MCF 10A (cell line): ENCODE measurements at regions of chr2 and their contacts with region 1.

Region 1: GRCh38 chr2:71157124-71157793 is 26.8 kb downstream of the MPHOSPH10 start:
- DNase-seq: peak; percentile 60
- H3K4me3 Mint-ChIP-seq: peak overlapping the region; percentile 13
- H3K27ac Mint-ChIP-seq: no peak overlapping the region
- H3K4me1 Mint-ChIP-seq: peaks cover 16% of the 10 kb centered on the region
- H3K27me3 Mint-ChIP-seq: no peaks in the 10 kb centered on the region
- CTCF ChIP-seq: peak; percentile 70

Region 2: GRCh38 chr2:71018625-71019024 is 138.6 kb before region 1 on chr2:
- CTCF ChIA-PET with region 1: interaction called, 4 read pairs
- POLR2A ChIA-PET with region 1: no interaction called
- intact Hi-C with region 1: loop called (anchors 1 kb)
- DNase-seq: no peak
- H3K4me3 Mint-ChIP-seq: no peak overlapping the region
- H3K27ac Mint-ChIP-seq: no peak overlapping the region
- H3K4me1 Mint-ChIP-seq: peaks cover 6% of the 10 kb centered on the region
- H3K27me3 Mint-ChIP-seq: no peaks in the 10 kb centered on the region
- CTCF ChIP-seq: no peak

Region 3: GRCh38 chr2:71100195-71100964 is 56.9 kb before region 1 on chr2:
- CTCF ChIA-PET with region 1: interaction called, 3 read pairs
- POLR2A ChIA-PET with region 1: no interaction called
- intact Hi-C with region 1: loop called (anchors 1 kb)
- DNase-seq: peak; percentile 75
- H3K4me3 Mint-ChIP-seq: no peak overlapping the region
- H3K27ac Mint-ChIP-seq: no peak overlapping the region
- H3K4me1 Mint-ChIP-seq: peaks cover 11% of the 10 kb centered on the region
- H3K27me3 Mint-ChIP-seq: no peaks in the 10 kb centered on the region
- CTCF ChIP-seq: peak; percentile 50

Region 4: DNA sequence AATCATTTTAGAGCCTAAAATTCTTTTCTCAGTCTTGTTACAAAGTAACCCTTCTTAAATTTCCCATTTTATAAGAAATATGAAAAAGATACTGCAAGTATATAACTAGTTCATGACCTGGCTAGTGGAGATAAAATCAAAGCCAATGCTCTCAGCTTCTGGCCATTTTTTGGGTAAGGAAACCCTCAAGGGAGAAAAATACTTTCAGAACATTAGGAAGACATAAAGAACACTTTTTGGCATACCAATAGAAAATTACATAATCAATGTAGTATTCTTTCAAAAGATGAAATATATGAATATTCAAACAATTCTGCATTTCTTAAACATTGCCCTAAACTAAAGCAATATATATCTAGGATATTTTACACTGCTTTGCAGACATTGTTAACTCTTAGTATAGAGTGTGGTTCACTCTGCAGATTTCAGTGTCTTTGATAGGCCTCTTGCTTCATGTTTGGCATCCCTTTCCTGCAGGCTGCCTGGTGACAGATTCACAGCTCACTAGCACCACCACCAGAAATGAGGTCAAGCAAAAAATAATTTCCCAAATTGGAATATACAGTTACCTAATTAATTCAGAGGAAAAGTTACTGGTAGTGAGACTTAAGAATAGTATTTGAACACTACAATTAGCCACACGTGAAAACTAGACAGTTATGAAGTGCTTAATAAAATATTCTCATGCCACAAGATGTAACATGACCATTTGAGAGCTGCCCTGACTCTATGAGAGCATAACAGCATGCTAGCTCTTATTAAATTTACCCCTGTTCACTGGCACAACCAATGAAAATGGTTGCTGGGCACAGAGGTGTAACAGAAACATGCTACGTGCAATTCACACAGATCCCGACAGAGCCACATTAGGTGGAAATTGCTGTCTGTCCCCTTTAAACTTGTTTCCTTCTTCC is 33.7 kb after region 1 on chr2:
- CTCF ChIA-PET with region 1: interaction called, 14 read pairs
- POLR2A ChIA-PET with region 1: interaction called, 3 read pairs
- intact Hi-C with region 1: loop called (anchors 1 kb)
- DNase-seq: peak; percentile 43
- H3K4me3 Mint-ChIP-seq: no peak overlapping the region
- H3K27ac Mint-ChIP-seq: no peak overlapping the region
- H3K4me1 Mint-ChIP-seq: no peaks in the 10 kb centered on the region
- H3K27me3 Mint-ChIP-seq: no peaks in the 10 kb centered on the region
- CTCF ChIP-seq: peak; percentile 41

Region 5: GRCh38 chr2:71276311-71277146 is 119.3 kb after region 1 on chr2:
- CTCF ChIA-PET with region 1: interaction called, 20 read pairs
- POLR2A ChIA-PET with region 1: interaction called, 5 read pairs
- intact Hi-C with region 1: loop called (anchors 5 kb)
- DNase-seq: peak; percentile 91
- H3K4me3 Mint-ChIP-seq: peak overlapping the region; percentile 84
- H3K27ac Mint-ChIP-seq: no peak overlapping the region
- H3K4me1 Mint-ChIP-seq: peaks cover 16% of the 10 kb centered on the region
- H3K27me3 Mint-ChIP-seq: peaks cover 29% of the 10 kb centered on the region
- CTCF ChIP-seq: no peak

Region 6: GRCh38 chr2:71282495-71282894 is 125.2 kb after region 1 on chr2:
- CTCF ChIA-PET with region 1: interaction called, 20 read pairs
- POLR2A ChIA-PET with region 1: interaction called, 5 read pairs
- intact Hi-C with region 1: loop called (anchors 5 kb)
- DNase-seq: peak; percentile 34
- H3K4me3 Mint-ChIP-seq: no peak overlapping the region
- H3K27ac Mint-ChIP-seq: no peak overlapping the region
- H3K4me1 Mint-ChIP-seq: peaks cover 10% of the 10 kb centered on the region
- H3K27me3 Mint-ChIP-seq: no peaks in the 10 kb centered on the region
- CTCF ChIP-seq: peak; percentile 26